Heart left ventricle (tissue), 16 donors: ENCODE measurements at regions of chr6 and their contacts with region 1.

Region 1: GRCh38 chr6:94736236-94736635 is 841.1 kb upstream of the MANEA start:
- DNase-seq: no peak
- ATAC-seq: no peak
- H3K4me3 ChIP-seq: no peak overlapping the region
- H3K27ac ChIP-seq: no peak overlapping the region
- H3K4me1 ChIP-seq: no peaks in the 10 kb centered on the region
- H3K27me3 ChIP-seq: no peaks in the 10 kb centered on the region
- CTCF ChIP-seq: no peak
- POLR2A ChIP-seq: no peak

Region 2: GRCh38 chr6:94254689-94255088 is 481.5 kb before region 1 on chr6:
- intact Hi-C with region 1: no loop called
- DNase-seq: no peak
- ATAC-seq: no peak
- H3K4me3 ChIP-seq: no peak overlapping the region
- H3K27ac ChIP-seq: no peak overlapping the region
- H3K4me1 ChIP-seq: no peaks in the 10 kb centered on the region
- H3K27me3 ChIP-seq: no peaks in the 10 kb centered on the region
- CTCF ChIP-seq: peak in 5 of 12 donors; percentile 11 to 28 (median 22)
- POLR2A ChIP-seq: no peak

Region 3: GRCh38 chr6:94721459-94721858 is 14.8 kb before region 1 on chr6:
- intact Hi-C with region 1: loop called in 1 of 10 experiments (anchors 2 kb)
- DNase-seq: no peak
- ATAC-seq: no peak
- H3K4me3 ChIP-seq: no peak overlapping the region
- H3K27ac ChIP-seq: no peak overlapping the region
- H3K4me1 ChIP-seq: no peaks in the 10 kb centered on the region
- H3K27me3 ChIP-seq: no peaks in the 10 kb centered on the region
- CTCF ChIP-seq: no peak
- POLR2A ChIP-seq: no peak